ENCODE measurements at regions of chr12 and their contacts with region 1.

Region 1: GRCh38 chr12:15276088-15276698 is 46.1 kb upstream of the PTPRO start:
- DNase-seq: peak in 1 of 6 donors; percentile 29
- ATAC-seq: peak; percentile 49 to 61 (median 54)
- H3K4me3 ChIP-seq: no peak overlapping the region
- H3K27ac ChIP-seq: no peak overlapping the region
- H3K4me1 ChIP-seq: peaks cover 0 to 4% (median 4%) of the 10 kb centered on the region in 3 donors
- H3K27me3 ChIP-seq: no peaks in the 10 kb centered on the region
- CTCF ChIP-seq: peak; percentile 48 to 58 (median 52)

Region 2: DNA sequence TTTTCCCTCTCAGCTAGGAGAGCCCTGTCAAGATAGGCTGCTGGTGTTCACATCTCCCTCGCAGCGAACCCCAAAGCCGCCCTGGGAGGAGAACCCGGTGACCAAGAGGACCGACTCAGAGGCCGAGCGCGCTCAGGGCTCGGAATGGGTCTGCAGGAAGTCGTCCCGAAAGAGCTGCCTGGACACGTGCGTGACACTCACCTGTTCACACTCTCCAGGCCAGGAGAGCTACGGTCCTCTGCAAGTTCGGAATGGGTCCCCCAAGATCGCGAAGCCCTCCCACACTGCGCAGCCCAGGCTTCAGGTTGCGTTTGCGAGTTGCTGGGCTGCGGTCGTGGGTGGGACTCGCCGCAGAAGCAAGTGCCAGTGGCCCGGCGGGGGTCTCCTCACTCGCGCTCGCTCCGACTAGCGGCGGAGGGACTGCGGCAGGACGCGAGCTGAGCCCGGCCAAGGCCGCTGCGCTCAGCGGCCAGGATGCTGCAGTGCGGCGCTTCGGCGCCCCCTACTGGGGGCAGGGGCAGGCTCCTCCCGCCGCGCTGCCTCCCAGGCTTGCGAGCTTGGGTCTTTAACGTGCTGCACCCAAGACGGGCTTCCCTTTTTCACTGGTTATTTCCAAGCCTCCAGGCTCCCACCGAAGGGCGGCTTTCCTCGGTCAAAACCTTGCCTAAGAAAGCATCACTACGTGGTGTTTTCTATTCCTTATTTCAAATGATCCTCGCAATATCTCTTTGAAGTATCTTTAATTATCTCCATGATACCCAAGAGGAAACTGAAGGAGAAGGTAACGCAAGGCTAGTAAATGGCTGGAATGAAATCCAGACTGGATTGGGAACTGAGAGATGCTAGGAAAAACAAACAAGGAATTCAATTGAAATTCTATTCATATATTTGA is 55.0 kb before region 1 on chr12 and contains the start of gene RERG:
- intact Hi-C with region 1: no loop called
- DNase-seq: peak; percentile 61 to 97 (median 84)
- ATAC-seq: peak; percentile 99 to 100 (median 100)
- H3K4me3 ChIP-seq: peak within 1 kb of the TSS; percentile 22 to 52 (median 30)
- H3K27ac ChIP-seq: peak within 1 kb of the TSS; percentile 3 to 77 (median 49)
- H3K4me1 ChIP-seq: no peaks in the 10 kb centered on the region
- H3K27me3 ChIP-seq: no peaks in the 10 kb centered on the region
- CTCF ChIP-seq: peak; percentile 96 to 98 (median 98)
- total RNA-seq, gene RERG: 2.0 to 10.4 (median 5.2) TPM

Region 3: GRCh38 chr12:15522565-15523187 is 246.5 kb after region 1 on chr12:
- intact Hi-C with region 1: loop called in 1 of 3 experiments (anchors 5 kb)
- DNase-seq: no peak
- ATAC-seq: peak in 3 of 4 donors; percentile 71 to 76 (median 71)
- H3K4me3 ChIP-seq: no peak overlapping the region
- H3K27ac ChIP-seq: no peak overlapping the region
- H3K4me1 ChIP-seq: no peaks in the 10 kb centered on the region
- H3K27me3 ChIP-seq: peaks cover 0 to 5% (median 0%) of the 10 kb centered on the region in 4 donors
- CTCF ChIP-seq: peak in 2 of 4 donors; percentile 18 to 31

Region 4: GRCh38 chr12:15584366-15585041 is 308.3 kb after region 1 on chr12:
- intact Hi-C with region 1: loop called in 1 of 3 experiments (anchors 10 kb)
- DNase-seq: no peak
- ATAC-seq: peak in 3 of 4 donors; percentile 57 to 69 (median 63)
- H3K4me3 ChIP-seq: no peak overlapping the region
- H3K27ac ChIP-seq: no peak overlapping the region
- H3K4me1 ChIP-seq: no peaks in the 10 kb centered on the region
- H3K27me3 ChIP-seq: no peaks in the 10 kb centered on the region
- CTCF ChIP-seq: peak in 3 of 4 donors; percentile 33 to 44 (median 41)

Region 5: DNA sequence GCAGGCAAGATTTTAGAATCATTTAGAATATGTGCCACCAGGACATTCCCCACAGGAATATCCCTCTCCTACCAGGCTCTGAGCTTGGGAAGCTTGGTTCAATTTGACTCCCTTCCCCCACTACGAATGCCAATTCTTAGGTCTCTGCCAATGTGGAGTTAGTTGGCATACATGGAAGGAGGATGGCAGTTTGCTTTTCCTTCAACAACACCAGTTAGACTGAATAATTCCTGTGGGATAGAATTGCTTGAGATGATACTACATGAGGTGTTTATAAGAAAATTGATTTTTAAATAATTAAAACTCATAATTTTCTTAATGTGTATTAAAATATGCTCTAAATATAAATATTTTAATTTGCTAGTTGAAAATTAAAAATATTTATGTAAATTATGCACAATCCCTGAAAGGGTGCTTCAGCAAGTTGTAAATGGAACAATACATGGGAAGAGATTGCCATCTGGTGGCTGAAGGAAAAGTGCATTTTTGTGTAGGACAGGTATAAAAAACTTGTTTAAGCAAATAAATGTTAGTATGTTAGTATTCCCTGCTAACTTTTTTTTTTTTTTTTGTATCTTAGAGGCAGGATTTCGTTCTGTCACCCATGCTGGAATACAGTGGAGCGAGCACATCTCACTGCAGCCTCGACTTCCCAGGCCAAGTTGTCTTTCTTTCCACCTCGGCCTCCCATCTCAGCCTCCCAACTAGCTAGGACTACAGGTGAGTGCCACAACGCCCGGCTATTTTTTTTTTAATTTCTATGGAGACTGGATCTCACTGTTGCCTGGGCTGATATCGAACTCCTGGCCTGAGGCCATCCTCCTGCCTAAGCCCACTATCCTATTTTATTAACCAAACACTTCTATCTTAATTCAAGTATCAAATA is 580.1 kb after region 1 on chr12:
- intact Hi-C with region 1: loop called in 1 of 3 experiments (anchors 5 kb)
- DNase-seq: peak in 3 of 6 donors; percentile 25 to 61 (median 30)
- ATAC-seq: peak; percentile 64 to 90 (median 85)
- H3K4me3 ChIP-seq: no peak overlapping the region
- H3K27ac ChIP-seq: no peak overlapping the region
- H3K4me1 ChIP-seq: no peaks in the 10 kb centered on the region
- H3K27me3 ChIP-seq: no peaks in the 10 kb centered on the region
- CTCF ChIP-seq: peak; percentile 40 to 73 (median 70)

Measured in pancreas (tissue), 10 donors.